ENCODE measurements at regions of chrX and their contacts with region 1.

Region 1: GRCh38 chrX:2819345-2820135 is 9.2 kb upstream of the GYG2 start:
- DNase-seq: peak in 1 of 2 donors; percentile 62
- H3K4me3 ChIP-seq: no peak overlapping the region
- H3K27ac ChIP-seq: no peak overlapping the region
- H3K4me1 ChIP-seq: no peaks in the 10 kb centered on the region
- H3K27me3 ChIP-seq: no peaks in the 10 kb centered on the region
- CTCF ChIP-seq: peak in 3 of 7 experiments; percentile 12 to 41 (median 23)
- EP300 ChIP-seq: no peak
- POLR2A ChIP-seq: no peak

Region 2: GRCh38 chrX:2640275-2641150 is 179.0 kb before region 1 on chrX:
- intact Hi-C with region 1: loop called (anchors 10 kb)
- DNase-seq: no peak
- H3K4me3 ChIP-seq: no peak overlapping the region
- H3K27ac ChIP-seq: no peak overlapping the region
- H3K4me1 ChIP-seq: no peaks in the 10 kb centered on the region
- H3K27me3 ChIP-seq: no peaks in the 10 kb centered on the region
- CTCF ChIP-seq: no peak
- EP300 ChIP-seq: no peak
- POLR2A ChIP-seq: no peak

Region 3: GRCh38 chrX:2665387-2666304 is 153.9 kb before region 1 on chrX:
- intact Hi-C with region 1: no loop called
- DNase-seq: no peak
- H3K4me3 ChIP-seq: no peak overlapping the region
- H3K27ac ChIP-seq: no peak overlapping the region
- H3K4me1 ChIP-seq: peaks cover 0 to 8% (median 4%) of the 10 kb centered on the region in 4 donors
- H3K27me3 ChIP-seq: no peaks in the 10 kb centered on the region
- CTCF ChIP-seq: no peak
- EP300 ChIP-seq: no peak
- POLR2A ChIP-seq: no peak